Aorta (tissue), 5 donors: ENCODE measurements at regions of chr2 and their contacts with region 1.

Region 1: GRCh38 chr2:131801210-131801744 is 273.6 kb downstream of the CCDC74A start:
- DNase-seq: no peak
- ATAC-seq: no peak
- H3K4me3 ChIP-seq: no peak overlapping the region
- H3K27ac ChIP-seq: no peak overlapping the region
- H3K4me1 ChIP-seq: no peaks in the 10 kb centered on the region
- H3K27me3 ChIP-seq: no peaks in the 10 kb centered on the region

Region 2: GRCh38 chr2:131413148-131413747 is 388.0 kb before region 1 on chr2:
- intact Hi-C with region 1: loop called in 1 of 2 experiments (anchors 10 kb)
- DNase-seq: no peak
- ATAC-seq: no peak
- H3K4me3 ChIP-seq: no peak overlapping the region
- H3K27ac ChIP-seq: no peak overlapping the region
- H3K4me1 ChIP-seq: no peaks in the 10 kb centered on the region
- H3K27me3 ChIP-seq: peaks cover 0 to 1% of the 10 kb centered on the region in 2 donors

Region 3: GRCh38 chr2:131682122-131682944 is 118.9 kb before region 1 on chr2:
- intact Hi-C with region 1: loop called (anchors 5 to 10 kb)
- DNase-seq: peak; percentile 90 to 92
- ATAC-seq: peak; percentile 99
- H3K4me3 ChIP-seq: peak overlapping the region; percentile 22 to 61
- H3K27ac ChIP-seq: peak overlapping the region in 1 of 2 donors; percentile 43
- H3K4me1 ChIP-seq: no peaks in the 10 kb centered on the region
- H3K27me3 ChIP-seq: no peaks in the 10 kb centered on the region